H1 (cell line): ENCODE measurements at regions of chr20 and their contacts with region 1.

Region 1: DNA sequence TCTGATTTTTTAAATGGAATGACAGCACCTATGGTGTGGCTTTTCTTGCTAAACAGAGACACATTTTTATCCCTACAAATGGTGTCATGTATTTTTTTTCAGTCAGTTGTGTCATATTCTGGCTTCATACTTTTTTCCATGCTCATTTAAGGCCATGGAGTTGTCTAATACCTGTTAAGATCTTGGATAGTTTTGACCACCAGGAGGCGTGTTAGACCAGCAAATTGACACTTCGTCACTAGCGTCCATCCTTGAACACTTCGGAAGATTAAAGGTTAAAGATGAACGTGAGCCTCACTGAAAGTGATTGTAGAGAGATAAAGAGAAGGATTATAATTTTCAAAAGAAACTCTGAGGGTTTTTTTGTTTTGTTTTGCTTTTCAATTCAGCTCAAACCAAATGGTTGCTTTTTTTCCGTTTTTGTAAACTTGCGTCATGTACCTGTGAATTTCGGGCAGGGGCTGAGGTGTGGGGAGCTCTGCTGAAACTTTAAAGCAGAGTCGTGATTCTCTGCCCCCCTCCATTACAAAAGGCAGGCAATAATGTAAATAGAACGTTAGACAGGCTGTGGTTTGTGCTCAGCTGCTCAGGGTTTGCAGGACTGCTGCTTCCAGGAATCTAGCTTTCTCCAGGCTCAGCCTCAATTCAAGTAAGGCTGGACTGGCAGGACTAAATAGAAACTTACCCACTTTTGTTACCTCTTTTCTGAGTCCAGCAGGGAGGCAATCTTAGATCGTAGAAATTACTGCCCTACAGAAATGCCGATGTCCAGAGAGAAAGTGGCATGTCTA is 245.1 kb downstream of the FOXA2 start:
- DNase-seq: peak; percentile 17 to 57
- H3K4me3 ChIP-seq: no peak overlapping the region
- H3K27ac ChIP-seq: no peak overlapping the region
- H3K4me1 ChIP-seq: no peaks in the 10 kb centered on the region
- H3K27me3 ChIP-seq: peaks cover 0 to 7% (median 0%) of the 10 kb centered on the region in 4 experiments; a peak in 2 of 7 replicates
- CTCF ChIP-seq: peak in 2 of 3 experiments; percentile 75 to 80; a peak in 3 of 4 replicates
- EP300 ChIP-seq: no peak
- POLR2A ChIP-seq: no peak
- RAD21 ChIP-seq: peak; percentile 96

Region 2: GRCh38 chr20:22098511-22098910 is 240.8 kb before region 1 on chr20:
- CTCF ChIA-PET with region 1: no interaction called
- POLR2A ChIA-PET with region 1: no interaction called
- DNase-seq: no peak
- H3K4me3 ChIP-seq: no peak overlapping the region
- H3K27ac ChIP-seq: no peak overlapping the region
- H3K4me1 ChIP-seq: no peaks in the 10 kb centered on the region
- H3K27me3 ChIP-seq: no peaks in the 10 kb centered on the region
- CTCF ChIP-seq: peak; percentile 16 to 34 (median 28); a peak in 3 of 4 replicates
- EP300 ChIP-seq: no peak
- POLR2A ChIP-seq: no peak
- RAD21 ChIP-seq: peak; percentile 21 to 44; a peak in 3 of 4 replicates

Region 3: GRCh38 chr20:22371843-22372242 is 32.6 kb after region 1 on chr20:
- CTCF ChIA-PET with region 1: interaction called, 10 read pairs
- POLR2A ChIA-PET with region 1: no interaction called
- DNase-seq: no peak
- H3K4me3 ChIP-seq: no peak overlapping the region
- H3K27ac ChIP-seq: no peak overlapping the region
- H3K4me1 ChIP-seq: peaks cover 0 to 8% (median 1%) of the 10 kb centered on the region in 4 experiments; a peak in 2 of 7 replicates
- H3K27me3 ChIP-seq: peaks cover 0 to 10% (median 2%) of the 10 kb centered on the region in 4 experiments; a peak in 5 of 7 replicates
- CTCF ChIP-seq: no peak
- EP300 ChIP-seq: no peak
- POLR2A ChIP-seq: no peak
- RAD21 ChIP-seq: no peak

Region 4: GRCh38 chr20:22575087-22575721 is 235.9 kb after region 1 on chr20:
- CTCF ChIA-PET with region 1: interaction called, 25 read pairs
- POLR2A ChIA-PET with region 1: no interaction called
- DNase-seq: peak in 1 of 2 experiments; percentile 50
- H3K4me3 ChIP-seq: no peak overlapping the region
- H3K27ac ChIP-seq: no peak overlapping the region
- H3K4me1 ChIP-seq: peaks cover 14 to 43% (median 21%) of the 10 kb centered on the region in 4 experiments
- H3K27me3 ChIP-seq: peaks cover 92 to 99% (median 97%) of the 10 kb centered on the region in 4 experiments
- CTCF ChIP-seq: no peak
- EP300 ChIP-seq: no peak
- POLR2A ChIP-seq: no peak
- RAD21 ChIP-seq: no peak

Region 5: DNA sequence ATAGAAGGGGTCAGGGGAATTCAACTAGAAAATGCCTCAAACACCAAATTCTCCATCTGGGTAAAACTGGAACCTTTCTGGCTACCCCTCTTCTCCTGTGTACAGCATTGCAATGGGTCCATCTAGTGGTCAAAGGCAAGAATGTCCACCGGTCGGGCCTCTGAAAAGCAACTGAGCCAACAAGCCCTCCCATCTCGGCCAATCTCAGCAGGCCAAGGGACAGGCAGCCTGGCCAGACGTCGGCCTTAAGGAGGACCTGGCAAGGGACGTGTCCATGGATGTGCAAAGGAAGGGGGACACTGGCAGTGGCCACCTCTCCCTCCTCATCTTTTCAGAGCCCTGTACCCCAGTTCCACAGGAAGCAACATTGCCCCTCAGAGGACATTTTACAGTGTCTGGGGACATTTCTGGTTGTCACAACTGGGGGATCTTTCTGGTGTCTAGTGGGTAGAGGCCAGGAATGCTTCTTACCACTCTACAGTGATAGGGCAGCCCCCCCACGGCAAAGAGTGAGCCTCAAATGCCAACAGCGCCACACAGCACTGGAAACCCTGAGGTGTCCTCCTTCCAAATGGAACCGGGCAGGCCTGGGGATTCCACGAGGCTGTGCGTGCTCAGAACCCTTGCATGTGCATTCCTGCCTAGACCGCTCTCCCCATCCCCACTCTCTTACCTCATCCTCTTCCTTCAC is 344.9 kb after region 1 on chr20:
- CTCF ChIA-PET with region 1: interaction called, 140 read pairs
- POLR2A ChIA-PET with region 1: interaction called, 4 read pairs
- DNase-seq: peak; percentile 47 to 83
- H3K4me3 ChIP-seq: no peak overlapping the region
- H3K27ac ChIP-seq: no peak overlapping the region
- H3K4me1 ChIP-seq: no peaks in the 10 kb centered on the region
- H3K27me3 ChIP-seq: no peaks in the 10 kb centered on the region; a peak in 3 of 7 replicates
- CTCF ChIP-seq: peak; percentile 69 to 93 (median 91)
- EP300 ChIP-seq: no peak
- POLR2A ChIP-seq: no peak
- RAD21 ChIP-seq: peak; percentile 99